Transverse colon (tissue), 4 donors: ENCODE measurements at regions of chr18 and their contacts with region 1.

Region 1: DNA sequence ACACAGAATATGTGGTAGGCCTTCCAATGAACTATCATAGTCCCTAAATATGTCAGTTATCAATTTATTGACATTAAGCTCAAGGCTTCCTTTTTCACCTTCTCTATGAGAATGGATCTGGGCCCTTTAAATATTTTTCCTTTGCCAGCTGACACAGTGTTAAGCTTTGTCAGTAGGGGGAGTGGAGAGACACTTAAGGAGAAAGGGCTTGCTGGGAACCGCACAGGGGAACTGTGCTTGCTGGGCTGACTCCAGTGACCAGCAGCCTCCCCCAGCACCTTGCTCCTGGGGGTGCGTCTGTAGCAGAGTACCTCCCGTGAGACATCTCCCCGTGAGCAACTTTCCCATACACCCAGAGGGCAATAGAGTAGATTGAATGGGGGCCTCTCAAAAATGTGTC is 6.5 kb upstream of the PTPN2 start:
- DNase-seq: no peak
- H3K4me3 ChIP-seq: no peak overlapping the region
- H3K27ac ChIP-seq: no peak overlapping the region
- H3K4me1 ChIP-seq: peaks cover 0 to under 1% (median 0%) of the 10 kb centered on the region in 4 donors
- H3K27me3 ChIP-seq: peaks cover 7% of the 10 kb centered on the region
- CTCF ChIP-seq: peak in 2 of 5 experiments; percentile 9
- EP300 ChIP-seq: no peak
- POLR2A ChIP-seq: no peak

Region 2: GRCh38 chr18:12726774-12727550 is 163.5 kb before region 1 on chr18:
- in situ Hi-C with region 1: loop called in 1 of 4 experiments (anchors 5 kb)
- intact Hi-C with region 1: no loop called
- DNase-seq: peak; percentile 34
- H3K4me3 ChIP-seq: no peak overlapping the region
- H3K27ac ChIP-seq: no peak overlapping the region
- H3K4me1 ChIP-seq: no peaks in the 10 kb centered on the region
- H3K27me3 ChIP-seq: no peaks in the 10 kb centered on the region
- CTCF ChIP-seq: peak; percentile 88 to 92 (median 90)
- EP300 ChIP-seq: no peak
- POLR2A ChIP-seq: no peak

Region 3: GRCh38 chr18:12744103-12744502 is 146.4 kb before region 1 on chr18:
- in situ Hi-C with region 1: loop called in 1 of 4 experiments (anchors 10 kb)
- intact Hi-C with region 1: no loop called
- DNase-seq: no peak
- H3K4me3 ChIP-seq: no peak overlapping the region
- H3K27ac ChIP-seq: no peak overlapping the region
- H3K4me1 ChIP-seq: no peaks in the 10 kb centered on the region
- H3K27me3 ChIP-seq: no peaks in the 10 kb centered on the region
- CTCF ChIP-seq: peak; percentile 47 to 54 (median 48)
- EP300 ChIP-seq: no peak
- POLR2A ChIP-seq: no peak

Region 4: GRCh38 chr18:12768625-12769024 is 121.9 kb before region 1 on chr18:
- in situ Hi-C with region 1: loop called in 1 of 4 experiments (anchors 10 kb)
- intact Hi-C with region 1: no loop called
- DNase-seq: no peak
- H3K4me3 ChIP-seq: no peak overlapping the region
- H3K27ac ChIP-seq: no peak overlapping the region
- H3K4me1 ChIP-seq: no peaks in the 10 kb centered on the region
- H3K27me3 ChIP-seq: no peaks in the 10 kb centered on the region
- CTCF ChIP-seq: no peak
- EP300 ChIP-seq: no peak
- POLR2A ChIP-seq: no peak

Region 5: DNA sequence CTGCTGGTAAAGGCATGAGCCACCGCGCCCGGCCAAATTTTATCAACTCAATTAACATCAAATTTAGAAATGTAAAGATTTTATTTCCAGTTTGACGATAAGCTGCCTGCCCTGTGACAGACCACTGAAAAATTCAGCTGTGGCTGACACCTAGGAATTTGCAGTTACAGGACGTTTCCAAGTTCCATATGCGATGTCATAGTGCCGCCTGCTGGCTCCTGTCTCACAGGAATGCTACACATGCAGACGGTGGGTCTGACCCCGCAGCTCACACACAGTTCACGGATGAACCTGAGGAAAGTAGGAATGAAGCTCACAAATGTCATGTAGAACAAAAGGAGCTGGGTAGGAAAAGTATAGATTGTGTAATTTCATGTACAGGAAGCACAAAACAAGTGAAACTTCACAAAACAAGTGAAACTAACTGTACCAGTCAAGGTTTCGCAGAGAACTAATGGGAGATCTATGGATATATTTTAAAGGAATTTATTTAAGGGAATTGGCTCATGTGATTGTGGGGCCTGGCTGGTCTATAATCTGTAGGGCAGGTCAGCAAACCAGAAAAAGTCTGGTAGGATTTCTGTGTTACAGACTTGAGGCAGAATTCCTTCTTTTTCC is 44.1 kb after region 1 on chr18:
- in situ Hi-C with region 1: no loop called
- intact Hi-C with region 1: loop called (anchors 2 kb)
- DNase-seq: peak; percentile 84
- H3K4me3 ChIP-seq: no peak overlapping the region
- H3K27ac ChIP-seq: no peak overlapping the region
- H3K4me1 ChIP-seq: peaks cover 0 to 6% (median 1%) of the 10 kb centered on the region in 4 donors
- H3K27me3 ChIP-seq: no peaks in the 10 kb centered on the region
- CTCF ChIP-seq: peak; percentile 77 to 93 (median 82)
- EP300 ChIP-seq: no peak
- POLR2A ChIP-seq: no peak